ENCODE measurements at regions of chr14 and their contacts with region 1.

Region 1: DNA sequence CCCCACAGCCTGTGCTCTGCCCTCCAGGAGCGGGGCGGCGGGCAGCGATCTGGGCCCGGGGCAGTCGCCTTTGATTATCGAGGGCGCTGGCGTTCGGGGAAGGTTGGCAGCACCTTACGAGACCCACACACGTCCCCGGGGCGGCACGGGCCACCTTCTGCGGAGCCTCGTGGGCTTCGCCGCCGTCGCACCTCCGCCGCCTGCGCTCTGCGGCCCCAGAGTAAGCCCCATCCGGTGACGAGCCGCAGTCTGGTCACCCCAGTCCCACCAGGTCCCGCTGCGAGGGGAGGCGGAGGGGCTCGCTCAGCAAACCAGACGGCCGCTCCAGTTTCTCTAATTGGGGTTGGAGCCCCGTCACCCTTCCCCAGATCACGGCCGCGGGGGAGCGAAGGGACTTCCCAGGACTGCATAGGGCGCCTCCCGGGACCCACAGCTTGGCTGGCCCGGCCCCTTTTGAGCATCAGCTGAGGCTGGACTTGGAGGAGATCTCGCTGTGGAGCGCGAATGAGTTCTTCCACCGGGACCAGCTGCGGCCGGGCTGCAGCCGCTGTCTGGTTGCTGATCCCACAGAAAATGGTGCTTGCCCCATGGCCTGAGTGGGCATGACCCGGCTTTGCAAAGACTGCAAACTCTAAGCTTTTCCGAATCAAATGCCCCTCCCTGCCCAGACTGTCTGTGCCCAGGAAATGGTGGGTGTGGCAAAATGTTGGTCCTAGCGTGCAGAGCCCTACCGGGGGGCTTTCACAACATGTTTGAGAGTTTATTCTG is 560 bp downstream of the LGALS3 start:
- DNase-seq: peak; percentile 73
- H3K4me3 Mint-ChIP-seq: peak overlapping the region; percentile 90
- H3K27ac Mint-ChIP-seq: peak overlapping the region; percentile 89
- H3K4me1 Mint-ChIP-seq: peaks cover 16% of the 10 kb centered on the region
- H3K27me3 Mint-ChIP-seq: no peaks in the 10 kb centered on the region
- CTCF ChIP-seq: no peak

Region 2: GRCh38 chr14:55077155-55077554 is 52.5 kb before region 1 on chr14:
- CTCF ChIA-PET with region 1: interaction called, 8 read pairs
- POLR2A ChIA-PET with region 1: interaction called, 56 read pairs
- intact Hi-C with region 1: no loop called
- DNase-seq: peak; percentile 83
- H3K4me3 Mint-ChIP-seq: peak overlapping the region; percentile 70
- H3K27ac Mint-ChIP-seq: peak overlapping the region; percentile 100
- H3K4me1 Mint-ChIP-seq: peaks cover 50% of the 10 kb centered on the region
- H3K27me3 Mint-ChIP-seq: no peaks in the 10 kb centered on the region
- CTCF ChIP-seq: no peak

Region 3: GRCh38 chr14:55094321-55095157 is 35.1 kb before region 1 on chr14:
- CTCF ChIA-PET with region 1: interaction called, 6 read pairs
- POLR2A ChIA-PET with region 1: interaction called, 79 read pairs
- intact Hi-C with region 1: loop called (anchors 1 kb)
- DNase-seq: peak; percentile 42
- H3K4me3 Mint-ChIP-seq: no peak overlapping the region
- H3K27ac Mint-ChIP-seq: no peak overlapping the region
- H3K4me1 Mint-ChIP-seq: peaks cover 17% of the 10 kb centered on the region
- H3K27me3 Mint-ChIP-seq: no peaks in the 10 kb centered on the region
- CTCF ChIP-seq: no peak

Region 4: DNA sequence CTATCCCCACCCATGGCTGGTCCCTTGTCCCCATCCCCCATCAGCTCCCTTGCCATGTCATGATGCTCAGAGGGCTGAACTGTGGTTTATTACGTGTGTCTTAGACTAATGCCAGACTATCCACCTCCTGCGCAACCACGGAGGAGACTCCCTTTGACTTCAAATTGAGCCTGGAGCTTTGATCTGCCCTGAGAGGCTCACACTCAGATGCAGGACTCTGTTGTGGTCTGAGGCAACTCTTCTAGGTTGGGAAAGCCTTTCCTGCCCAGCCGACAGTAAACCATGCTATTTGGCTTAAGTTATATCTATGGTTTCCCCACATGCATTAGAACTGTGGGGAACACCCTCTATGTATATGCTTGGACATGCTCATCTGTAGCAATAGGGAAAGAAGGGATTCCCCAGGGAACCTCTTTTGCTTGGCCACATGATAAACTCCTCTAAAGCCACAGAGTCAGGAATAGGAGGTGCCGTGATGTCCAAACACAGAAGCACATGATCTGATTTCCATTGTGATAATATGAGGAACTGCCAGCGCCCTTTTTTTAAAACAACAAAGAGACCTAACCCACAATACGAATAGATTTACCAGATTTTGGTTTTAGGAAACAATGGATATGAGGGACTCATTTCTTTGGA is 11.7 kb before region 1 on chr14:
- CTCF ChIA-PET with region 1: interaction called, 3 read pairs
- POLR2A ChIA-PET with region 1: interaction called, 34 read pairs
- intact Hi-C with region 1: no loop called
- DNase-seq: peak; percentile 46
- H3K4me3 Mint-ChIP-seq: no peak overlapping the region
- H3K27ac Mint-ChIP-seq: peak overlapping the region; percentile 72
- H3K4me1 Mint-ChIP-seq: peaks cover 33% of the 10 kb centered on the region
- H3K27me3 Mint-ChIP-seq: no peaks in the 10 kb centered on the region
- CTCF ChIP-seq: no peak

Region 5: DNA sequence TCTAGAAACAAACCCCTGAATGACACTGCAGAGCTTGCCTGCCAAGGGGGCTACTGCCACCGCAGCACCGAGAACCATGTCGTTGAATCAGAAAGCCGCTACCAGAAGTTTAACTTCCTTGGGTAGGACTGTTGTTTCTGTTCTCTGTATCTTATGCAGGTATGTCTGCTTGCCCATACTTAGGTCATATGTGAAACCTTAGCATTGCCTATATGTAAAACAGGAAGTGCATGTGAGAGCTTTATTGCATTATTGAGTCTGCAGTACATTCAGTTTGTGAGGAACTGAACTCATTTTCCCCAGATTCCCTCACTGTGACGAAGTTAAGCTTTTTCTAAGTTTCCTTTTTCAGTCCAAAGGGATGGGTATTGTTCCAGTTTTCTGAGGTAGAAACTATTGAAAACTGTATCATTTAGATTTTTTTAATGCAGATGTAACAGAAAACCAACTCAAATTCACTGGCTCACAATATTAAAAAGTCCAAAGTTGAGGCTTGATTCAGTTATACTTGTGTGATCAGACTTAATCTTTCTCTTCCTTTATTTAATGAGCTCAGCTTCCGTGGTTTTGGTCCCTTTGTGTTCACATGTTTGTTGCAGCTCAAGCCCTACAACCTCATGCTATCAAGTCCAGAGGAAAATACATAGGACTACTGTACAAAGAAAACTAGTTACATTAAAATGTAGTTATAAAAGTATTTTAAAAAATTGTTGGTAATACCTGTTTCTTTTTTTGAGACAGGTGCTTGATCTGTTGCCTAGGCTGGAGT is 148.5 kb after region 1 on chr14:
- CTCF ChIA-PET with region 1: no interaction called
- POLR2A ChIA-PET with region 1: no interaction called
- intact Hi-C with region 1: no loop called
- DNase-seq: no peak
- H3K4me3 Mint-ChIP-seq: no peak overlapping the region
- H3K27ac Mint-ChIP-seq: no peak overlapping the region
- H3K4me1 Mint-ChIP-seq: peaks cover 16% of the 10 kb centered on the region
- H3K27me3 Mint-ChIP-seq: no peaks in the 10 kb centered on the region
- CTCF ChIP-seq: no peak